Ovary (tissue), 10 donors: ENCODE measurements at regions of chr2 and their contacts with region 1.

Region 1: DNA sequence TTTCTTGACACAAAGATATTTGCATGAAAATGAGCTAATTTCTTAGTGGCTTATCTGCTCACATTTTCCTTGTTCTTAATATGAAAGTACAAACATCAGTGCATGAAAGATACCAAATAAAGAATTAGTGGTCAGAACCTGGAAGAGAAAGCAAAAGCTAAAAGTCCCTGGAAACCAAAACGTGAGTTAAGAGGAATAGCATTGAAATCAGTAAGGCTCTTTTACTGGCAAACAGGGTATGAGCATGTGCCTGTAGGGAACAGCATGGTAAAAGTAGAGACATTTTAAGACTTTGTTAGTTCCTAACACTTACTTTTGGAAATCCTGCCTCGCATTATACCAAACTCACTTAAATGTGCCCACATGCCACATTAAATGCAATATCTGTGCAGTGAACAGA is 31.9 kb upstream of the CWC22 start:
- DNase-seq: no peak
- H3K4me3 ChIP-seq: no peak overlapping the region
- H3K27ac ChIP-seq: no peak overlapping the region
- H3K4me1 ChIP-seq: no peaks in the 10 kb centered on the region
- H3K27me3 ChIP-seq: no peaks in the 10 kb centered on the region
- CTCF ChIP-seq: no peak
- EP300 ChIP-seq: no peak
- POLR2A ChIP-seq: no peak

Region 2: DNA sequence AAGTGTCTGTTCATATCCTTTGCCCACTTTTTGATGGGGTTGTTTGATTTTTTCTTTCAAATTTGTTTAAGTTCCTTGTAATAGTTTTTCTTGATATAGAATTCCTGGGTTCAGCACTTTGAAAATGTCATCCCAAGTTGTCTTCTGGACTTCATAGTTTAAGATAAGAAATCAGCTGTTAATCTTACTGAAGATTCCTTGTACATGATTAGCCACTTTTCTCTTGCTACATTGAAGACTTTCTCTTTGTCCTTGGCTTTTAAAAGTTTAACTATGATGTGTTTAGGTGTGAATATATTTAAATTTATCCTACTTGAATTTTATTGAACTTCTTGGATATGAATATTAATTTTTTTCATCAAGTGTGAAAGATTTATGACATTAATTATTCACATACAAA is 355.3 kb after region 1 on chr2:
- intact Hi-C with region 1: loop called in 1 of 4 experiments (anchors 5 kb)
- DNase-seq: no peak
- H3K4me3 ChIP-seq: no peak overlapping the region
- H3K27ac ChIP-seq: no peak overlapping the region
- H3K4me1 ChIP-seq: no peaks in the 10 kb centered on the region
- H3K27me3 ChIP-seq: no peaks in the 10 kb centered on the region
- CTCF ChIP-seq: no peak
- EP300 ChIP-seq: no peak
- POLR2A ChIP-seq: no peak

Region 3: GRCh38 chr2:180463608-180464007 is 424.6 kb after region 1 on chr2:
- intact Hi-C with region 1: no loop called
- DNase-seq: no peak
- H3K4me3 ChIP-seq: no peak overlapping the region
- H3K27ac ChIP-seq: no peak overlapping the region
- H3K4me1 ChIP-seq: no peaks in the 10 kb centered on the region
- H3K27me3 ChIP-seq: no peaks in the 10 kb centered on the region
- CTCF ChIP-seq: no peak
- EP300 ChIP-seq: no peak
- POLR2A ChIP-seq: no peak